Common myeloid progenitor, CD34-positive (primary cell): ENCODE measurements at regions of chr13 and their contacts with region 1.

Region 1: GRCh38 chr13:27362064-27362883 is 62.1 kb upstream of the GTF3A start:
- DNase-seq: peak; percentile 80 to 88 (median 84)
- H3K4me3 ChIP-seq: peak overlapping the region; percentile 24 to 87 (median 63)
- H3K27ac ChIP-seq: no peak overlapping the region
- H3K4me1 ChIP-seq: peaks cover 0 to 15% (median 10%) of the 10 kb centered on the region in 4 experiments
- H3K27me3 ChIP-seq: peaks cover 0 to 19% (median 4%) of the 10 kb centered on the region in 5 experiments

Region 2: DNA sequence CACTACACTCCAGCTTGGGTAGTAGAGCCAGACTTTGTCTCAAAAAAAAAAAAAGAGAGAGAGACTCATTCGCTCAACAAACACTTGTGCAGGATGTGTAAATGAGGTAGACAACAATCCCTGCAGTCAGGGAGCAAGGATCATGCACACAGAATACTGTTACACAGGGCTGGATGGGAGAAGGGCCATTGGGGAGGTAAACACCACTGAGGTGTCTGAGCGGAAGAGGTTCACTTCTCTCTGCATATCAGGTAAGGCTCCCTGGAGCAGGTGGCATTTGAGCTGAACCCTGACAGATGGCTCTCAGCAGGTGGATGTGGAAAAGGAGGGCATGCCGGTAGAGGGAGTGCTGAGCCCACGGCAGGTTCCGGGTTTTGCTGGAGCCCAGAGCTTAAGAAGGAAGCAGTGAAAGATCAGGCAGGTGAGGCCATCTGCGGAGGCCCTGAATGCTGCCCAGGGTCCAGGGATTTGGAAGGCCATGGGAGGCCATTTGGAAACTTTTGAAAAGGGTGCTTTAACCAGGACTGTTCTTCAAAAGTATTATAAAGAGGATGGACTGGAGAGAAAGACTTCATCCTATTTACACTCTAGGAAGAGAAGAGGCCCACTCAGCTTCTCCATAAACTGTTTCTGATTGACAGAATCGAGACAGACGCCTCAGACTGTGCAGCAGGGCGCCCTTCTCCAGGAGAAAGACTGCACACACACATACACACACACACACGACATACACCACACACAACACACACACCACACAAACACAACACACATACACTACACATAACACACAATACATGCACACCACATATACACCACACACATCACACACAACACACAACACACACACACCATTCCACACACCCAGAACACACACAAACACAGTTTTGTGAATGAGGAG is 390.0 kb before region 1 on chr13:
- CTCF ChIA-PET with region 1: interaction called, 10 read pairs
- POLR2A ChIA-PET with region 1: no interaction called
- DNase-seq: peak; percentile 73 to 87 (median 77)
- H3K4me3 ChIP-seq: no peak overlapping the region
- H3K27ac ChIP-seq: no peak overlapping the region
- H3K4me1 ChIP-seq: peaks cover 0 to 23% (median 9%) of the 10 kb centered on the region in 4 experiments
- H3K27me3 ChIP-seq: no peaks in the 10 kb centered on the region

Region 3: GRCh38 chr13:26996965-26997752 is 365.1 kb before region 1 on chr13:
- CTCF ChIA-PET with region 1: interaction called, 11 read pairs
- POLR2A ChIA-PET with region 1: no interaction called
- DNase-seq: no peak
- H3K4me3 ChIP-seq: peak overlapping the region in 1 of 7 experiments; percentile 8
- H3K27ac ChIP-seq: no peak overlapping the region
- H3K4me1 ChIP-seq: peaks cover 0 to 9% (median 3%) of the 10 kb centered on the region in 4 experiments
- H3K27me3 ChIP-seq: no peaks in the 10 kb centered on the region

Region 4: DNA sequence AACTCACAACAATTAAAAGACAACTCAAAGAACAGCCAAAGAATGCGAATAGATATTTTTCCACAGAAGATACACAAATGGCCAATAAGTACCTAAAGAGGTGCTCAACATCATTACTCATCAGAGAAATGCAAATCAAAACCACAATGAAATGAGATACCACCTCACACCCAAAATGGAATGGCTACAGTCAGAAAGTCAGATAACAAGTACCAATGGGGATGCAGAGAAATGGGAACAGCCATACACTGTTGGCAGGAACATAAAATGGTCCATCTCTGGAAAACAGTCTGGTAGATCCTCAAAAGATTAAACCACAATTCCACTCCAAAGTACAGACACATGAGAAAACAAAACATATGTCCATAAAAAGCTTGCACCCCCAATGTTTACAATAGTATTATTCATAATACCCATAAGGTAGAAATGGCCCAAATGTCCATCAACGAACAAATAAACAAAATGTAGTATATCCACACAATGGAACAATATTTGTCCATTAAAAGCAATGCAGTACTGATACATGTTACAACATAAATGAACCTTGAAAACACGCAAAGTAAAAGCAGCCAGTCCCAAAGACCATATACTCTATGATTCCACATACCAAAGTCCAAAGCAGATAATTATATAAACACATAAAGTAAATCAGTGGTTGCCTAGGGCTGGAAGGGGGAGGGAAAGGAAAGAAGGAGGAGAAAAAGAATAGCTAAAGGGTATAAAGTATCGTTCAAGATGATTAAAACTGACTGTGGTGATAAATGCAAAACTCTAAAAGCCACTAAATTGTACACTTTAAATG is 210.3 kb before region 1 on chr13:
- CTCF ChIA-PET with region 1: no interaction called
- POLR2A ChIA-PET with region 1: no interaction called
- DNase-seq: no peak
- H3K4me3 ChIP-seq: no peak overlapping the region
- H3K27ac ChIP-seq: no peak overlapping the region
- H3K4me1 ChIP-seq: no peaks in the 10 kb centered on the region
- H3K27me3 ChIP-seq: no peaks in the 10 kb centered on the region

Region 5: DNA sequence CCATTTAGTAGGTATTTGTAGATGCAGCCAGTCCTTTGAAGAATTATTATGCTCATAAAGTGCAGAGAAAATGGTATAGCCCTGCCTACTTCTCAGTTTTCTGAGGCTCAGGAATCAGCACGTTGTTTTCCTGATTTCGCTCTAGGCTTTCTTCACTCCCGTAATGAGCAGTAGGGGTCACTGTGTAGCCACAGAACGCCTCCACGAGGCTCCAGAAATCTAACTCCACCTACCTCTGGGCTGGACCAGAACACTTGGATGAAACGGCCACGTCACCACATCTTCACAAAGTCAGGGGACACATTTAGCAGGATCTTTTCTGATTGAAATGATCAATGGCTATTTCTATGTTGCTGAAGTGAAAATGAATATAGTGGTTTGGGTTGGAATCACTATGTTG is 12.4 kb after region 1 on chr13:
- CTCF ChIA-PET with region 1: interaction called, 132 read pairs
- POLR2A ChIA-PET with region 1: no interaction called
- DNase-seq: peak; percentile 83 to 89 (median 85)
- H3K4me3 ChIP-seq: no peak overlapping the region
- H3K27ac ChIP-seq: no peak overlapping the region
- H3K4me1 ChIP-seq: peaks cover 0 to 1% (median 0%) of the 10 kb centered on the region in 4 experiments
- H3K27me3 ChIP-seq: peaks cover 0 to 15% (median 11%) of the 10 kb centered on the region in 5 experiments

Region 6: DNA sequence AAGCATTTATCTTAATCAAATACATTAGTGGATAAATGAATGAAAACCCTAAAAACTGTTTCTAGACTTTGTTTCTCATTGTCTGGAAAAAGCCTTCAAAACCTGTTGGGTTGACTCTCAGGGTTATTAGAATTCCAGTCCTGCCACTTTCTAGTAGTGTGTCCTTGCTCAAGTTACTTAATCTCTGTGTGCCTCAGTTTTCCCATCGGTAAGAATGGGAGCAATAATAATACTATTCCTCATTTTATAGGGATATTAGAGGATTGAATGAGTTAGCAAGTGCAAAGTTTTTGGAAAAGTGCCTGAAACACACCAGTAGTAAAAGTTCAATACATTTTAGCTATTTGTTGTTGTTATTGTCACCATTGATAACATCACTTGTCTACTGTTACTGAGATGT is 623.3 kb after region 1 on chr13:
- CTCF ChIA-PET with region 1: interaction called, 33 read pairs
- POLR2A ChIA-PET with region 1: no interaction called
- DNase-seq: no peak
- H3K4me3 ChIP-seq: no peak overlapping the region
- H3K27ac ChIP-seq: no peak overlapping the region
- H3K4me1 ChIP-seq: peaks cover 0 to 2% (median under 1%) of the 10 kb centered on the region in 4 experiments
- H3K27me3 ChIP-seq: peaks cover 7 to 30% (median 18%) of the 10 kb centered on the region in 5 experiments